ENCODE measurements at regions of chr1 and their contacts with region 1.

Region 1: DNA sequence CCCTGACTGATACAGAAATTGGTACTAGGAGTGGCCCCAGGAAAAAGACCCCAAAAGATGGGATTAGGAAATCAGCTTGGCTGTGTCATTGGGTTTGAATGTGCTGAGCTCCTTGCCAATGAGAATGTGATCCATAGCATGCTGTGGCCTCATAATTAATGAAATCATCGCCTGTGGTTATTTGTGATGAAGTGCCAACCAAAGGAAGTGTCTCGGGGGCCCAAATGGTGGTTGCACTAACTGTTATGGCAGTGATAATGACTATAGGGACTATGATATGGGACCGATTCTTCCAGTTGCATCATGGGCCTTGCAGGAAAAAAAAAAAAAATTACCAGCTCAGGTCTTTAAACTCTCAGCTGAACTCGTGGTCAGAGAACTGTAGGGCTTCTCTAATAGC is 15.4 kb upstream of the ZDHHC18 start:
- DNase-seq: no peak
- ATAC-seq: no peak
- H3K4me3 ChIP-seq: no peak overlapping the region
- H3K27ac ChIP-seq: no peak overlapping the region
- H3K4me1 ChIP-seq: peaks cover 0 to 13% (median 0%) of the 10 kb centered on the region in 9 donors
- H3K27me3 ChIP-seq: no peaks in the 10 kb centered on the region
- CTCF ChIP-seq: no peak

Region 2: DNA sequence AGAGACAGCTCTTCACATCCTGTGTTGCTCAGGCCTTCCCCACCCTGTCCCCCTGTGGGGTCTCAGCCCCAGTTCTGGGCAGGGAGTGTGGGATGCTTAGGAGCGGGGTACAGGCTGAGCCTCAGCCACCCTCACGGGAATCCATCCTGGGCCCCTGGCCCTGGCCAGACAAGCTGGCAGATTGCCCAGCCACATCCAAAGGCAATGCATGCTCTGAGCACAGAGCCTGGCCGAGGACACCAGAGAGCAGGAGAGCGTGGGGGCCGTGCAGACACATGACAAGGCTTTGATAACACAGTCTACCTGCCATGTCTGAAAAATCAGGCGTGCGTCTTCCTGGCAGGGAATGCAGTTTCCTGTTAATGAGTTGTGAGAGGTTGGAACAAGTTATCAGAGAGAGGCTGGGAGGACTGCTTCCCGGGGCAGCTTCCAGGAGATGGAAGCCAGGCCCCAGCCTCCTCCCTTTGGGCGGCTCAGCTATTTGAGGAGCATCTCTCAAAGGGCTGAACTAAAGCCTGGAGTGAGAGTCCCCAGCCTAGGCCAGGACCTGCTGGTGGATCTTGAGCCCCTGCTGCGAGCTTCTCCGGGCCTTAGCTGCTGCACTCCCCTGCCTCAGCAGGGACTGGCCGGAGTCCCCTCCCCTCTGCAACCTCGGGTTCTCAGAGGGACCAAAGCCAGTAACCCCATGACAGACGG is 1083.3 kb before region 1 on chr1:
- intact Hi-C with region 1: loop called in 1 of 10 experiments (anchors 5 kb)
- DNase-seq: peak; percentile 71 to 80
- ATAC-seq: peak; percentile 82 to 93 (median 90)
- H3K4me3 ChIP-seq: peak overlapping the region in 2 of 10 donors; percentile 7 to 16
- H3K27ac ChIP-seq: peak overlapping the region in 9 of 10 donors; percentile 72 to 85 (median 77)
- H3K4me1 ChIP-seq: peaks cover 11 to 55% (median 40%) of the 10 kb centered on the region in 9 donors
- H3K27me3 ChIP-seq: no peaks in the 10 kb centered on the region
- CTCF ChIP-seq: no peak

Region 3: DNA sequence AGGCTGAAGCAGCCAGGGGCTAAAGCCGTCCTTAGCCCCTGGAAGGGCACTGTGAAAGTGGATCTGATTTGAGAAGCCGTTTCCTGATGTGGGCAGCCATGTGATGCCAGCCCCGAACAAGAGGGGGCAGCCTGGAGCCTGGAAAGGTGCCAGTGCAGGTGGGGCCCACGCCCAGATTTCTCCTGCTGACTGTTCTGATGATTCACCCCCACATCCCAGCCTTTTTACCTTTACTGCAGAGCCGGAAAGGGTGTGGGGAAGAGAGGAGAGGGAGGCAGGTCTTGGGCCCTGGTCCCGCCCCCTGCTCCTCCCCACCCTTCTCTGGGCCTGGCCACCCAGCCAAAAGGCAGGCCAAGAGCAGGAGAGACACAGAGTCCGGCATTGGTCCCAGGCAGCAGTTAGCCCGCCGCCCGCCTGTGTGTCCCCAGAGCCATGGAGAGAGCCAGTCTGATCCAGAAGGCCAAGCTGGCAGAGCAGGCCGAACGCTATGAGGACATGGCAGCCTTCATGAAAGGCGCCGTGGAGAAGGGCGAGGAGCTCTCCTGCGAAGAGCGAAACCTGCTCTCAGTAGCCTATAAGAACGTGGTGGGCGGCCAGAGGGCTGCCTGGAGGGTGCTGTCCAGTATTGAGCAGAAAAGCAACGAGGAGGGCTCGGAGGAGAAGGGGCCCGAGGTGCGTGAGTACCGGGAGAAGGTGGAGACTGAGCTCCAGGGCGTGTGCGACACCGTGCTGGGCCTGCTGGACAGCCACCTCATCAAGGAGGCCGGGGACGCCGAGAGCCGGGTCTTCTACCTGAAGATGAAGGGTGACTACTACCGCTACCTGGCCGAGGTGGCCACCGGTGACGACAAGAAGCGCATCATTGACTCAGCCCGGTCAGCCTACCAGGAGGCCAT is 52.0 kb after region 1 on chr1 and contains the start of gene SFN:
- intact Hi-C with region 1: no loop called
- DNase-seq: no peak
- ATAC-seq: no peak
- H3K4me3 ChIP-seq: peak within 1 kb of the TSS in 7 of 10 donors; percentile 45 to 78 (median 72)
- H3K27ac ChIP-seq: peak within 1 kb of the TSS in 1 of 10 donors; percentile 96
- H3K4me1 ChIP-seq: peaks cover 0 to 22% (median 15%) of the 10 kb centered on the region in 9 donors
- H3K27me3 ChIP-seq: no peaks in the 10 kb centered on the region
- CTCF ChIP-seq: peak in 1 of 9 donors; percentile 26
- total RNA-seq, gene SFN: 0.19 TPM in 1 of 10 donors, not detected in the others

Region 4: GRCh38 chr1:26938004-26938658 is 127.1 kb after region 1 on chr1:
- intact Hi-C with region 1: no loop called
- DNase-seq: peak; percentile 37
- ATAC-seq: peak; percentile 59 to 85 (median 76)
- H3K4me3 ChIP-seq: no peak overlapping the region
- H3K27ac ChIP-seq: peak overlapping the region in 9 of 10 donors; percentile 7 to 79 (median 67)
- H3K4me1 ChIP-seq: peaks cover 5 to 37% (median 21%) of the 10 kb centered on the region in 9 donors
- H3K27me3 ChIP-seq: no peaks in the 10 kb centered on the region
- CTCF ChIP-seq: no peak